ENCODE measurements at regions of chr6 and their contacts with region 1.

Region 1: GRCh38 chr6:89610149-89610642 is 28.4 kb downstream of the LYRM2 start:
- DNase-seq: peak; percentile 73 to 90
- ATAC-seq: peak; percentile 75
- H3K4me3 ChIP-seq: no peak overlapping the region
- H3K27ac ChIP-seq: no peak overlapping the region
- H3K4me1 ChIP-seq: no peaks in the 10 kb centered on the region
- H3K27me3 ChIP-seq: no peaks in the 10 kb centered on the region

Region 2: DNA sequence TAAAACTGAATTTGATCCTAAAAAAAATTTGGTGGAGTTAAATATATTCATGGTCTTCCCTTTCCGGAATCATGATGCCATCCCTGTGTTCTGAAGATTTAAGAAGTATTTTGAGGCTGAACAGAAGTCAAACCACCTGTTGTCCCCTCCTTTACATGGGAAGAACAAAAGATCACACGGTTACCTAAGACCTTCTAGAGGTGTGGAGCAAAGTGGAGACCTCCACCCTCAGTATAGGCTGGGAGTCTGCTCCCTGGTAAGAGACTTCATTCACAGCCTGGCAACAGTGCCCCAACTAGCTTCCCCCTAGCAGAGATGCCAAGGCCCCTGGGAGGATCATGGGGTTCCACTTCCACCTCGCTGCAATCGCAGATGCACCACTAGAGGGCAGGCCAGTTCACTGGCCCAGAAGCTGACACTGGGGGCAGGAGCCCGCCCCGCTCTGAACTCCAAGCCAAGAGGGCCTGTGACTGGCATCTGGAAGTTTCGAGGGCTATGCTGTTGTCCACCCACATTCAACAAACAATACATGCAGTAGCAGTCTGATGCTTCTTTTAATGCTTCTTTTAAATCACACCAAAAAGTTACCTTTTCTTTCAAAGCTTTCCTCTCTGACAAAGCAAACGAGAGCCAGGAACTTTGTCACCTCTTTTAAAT is 238.2 kb before region 1 on chr6:
- intact Hi-C with region 1: loop called in 1 of 2 experiments (anchors 5 kb)
- DNase-seq: peak; percentile 85 to 93
- ATAC-seq: peak; percentile 90
- H3K4me3 ChIP-seq: no peak overlapping the region
- H3K27ac ChIP-seq: no peak overlapping the region
- H3K4me1 ChIP-seq: no peaks in the 10 kb centered on the region
- H3K27me3 ChIP-seq: no peaks in the 10 kb centered on the region

Region 3: DNA sequence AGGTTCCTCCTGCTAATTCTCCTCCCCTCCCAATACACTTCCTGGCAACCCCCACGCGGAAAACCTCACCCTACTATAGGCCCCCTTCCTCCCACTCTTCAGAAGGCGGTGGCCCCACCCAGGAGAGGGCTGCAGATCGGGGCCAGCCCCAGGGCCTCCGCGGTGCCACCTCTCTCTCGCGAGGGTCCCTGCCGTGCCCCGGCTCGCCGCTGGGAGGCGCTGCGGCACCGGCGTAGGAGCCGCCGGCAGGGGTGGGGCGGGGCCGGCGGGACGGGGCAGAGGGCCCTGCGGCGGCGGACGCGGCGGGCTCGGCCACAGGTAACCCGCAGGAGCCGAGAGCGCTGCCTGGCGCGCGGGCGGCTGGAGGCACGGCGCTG is 177.3 kb before region 1 on chr6 and contains the start of gene ANKRD6:
- intact Hi-C with region 1: loop called in 1 of 2 experiments (anchors 1 kb)
- DNase-seq: peak; percentile 78 to 94
- ATAC-seq: peak; percentile 97
- H3K4me3 ChIP-seq: peak within 1 kb of the TSS; percentile 77 to 84
- H3K27ac ChIP-seq: peak within 1 kb of the TSS in 1 of 2 donors; percentile 60
- H3K4me1 ChIP-seq: peaks cover 1 to 5% of the 10 kb centered on the region in 2 donors
- H3K27me3 ChIP-seq: no peaks in the 10 kb centered on the region
- total RNA-seq, gene ANKRD6: 38.3 to 45.9 TPM